Right ventricle myocardium superior (tissue), 1 donor: ENCODE measurements at regions of chr12 and their contacts with region 1.

Region 1: GRCh38 chr12:34217660-34218059 is 195.4 kb downstream of the ALG10 start:
- DNase-seq: no peak
- ATAC-seq: no peak

Region 2: GRCh38 chr12:34122206-34122605 is 95.5 kb before region 1 on chr12:
- intact Hi-C with region 1: loop called (anchors 2 kb)
- DNase-seq: no peak
- ATAC-seq: no peak